Head of caudate nucleus (tissue), 42 donors: ENCODE measurements at regions of chr3 and their contacts with region 1.

Region 1: DNA sequence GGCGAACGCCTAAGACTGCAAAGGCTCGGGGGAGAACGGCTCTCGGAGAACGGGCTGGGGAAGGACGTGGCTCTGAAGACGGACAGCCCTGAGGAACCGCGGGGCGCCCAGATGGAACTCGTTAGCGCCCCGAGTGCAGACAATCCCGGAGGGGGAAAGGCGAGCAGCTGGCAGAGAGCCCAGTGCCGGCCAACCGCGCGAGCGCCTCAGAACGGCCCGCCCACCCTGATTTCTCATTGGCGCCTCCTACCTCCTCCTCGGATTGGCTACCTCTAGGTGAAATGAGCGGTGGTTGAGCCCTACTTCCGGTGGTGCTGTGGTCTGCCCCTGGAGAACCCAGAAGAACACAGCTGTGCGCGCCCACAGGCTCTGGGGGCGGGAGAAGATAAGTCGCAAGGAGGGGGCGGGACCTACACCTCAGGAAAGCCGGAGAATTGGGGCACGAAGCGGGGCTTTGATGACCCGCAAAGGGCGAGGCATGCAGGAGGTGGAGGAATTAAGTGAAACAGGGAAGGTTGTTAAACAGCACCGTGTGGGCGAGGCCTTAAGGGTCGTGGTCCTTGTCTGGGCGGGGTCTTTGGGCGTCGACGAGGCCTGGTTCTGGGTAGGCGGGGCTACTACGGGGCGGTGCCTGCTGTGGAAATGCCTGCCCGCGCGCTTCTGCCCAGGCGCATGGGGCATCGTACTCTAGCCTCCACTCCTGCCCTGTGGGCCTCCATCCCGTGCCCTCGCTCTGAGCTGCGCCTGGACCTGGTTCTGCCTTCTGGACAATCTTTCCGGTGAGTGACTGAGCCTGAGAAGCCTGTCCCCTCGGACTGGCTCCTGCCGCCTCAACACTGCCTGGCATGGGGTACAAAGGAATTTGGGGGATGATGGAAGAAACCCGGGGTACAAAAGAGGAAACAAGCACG is at the start of gene OGG1:
- DNase-seq: peak; percentile 93 to 99 (median 97)

Region 2: DNA sequence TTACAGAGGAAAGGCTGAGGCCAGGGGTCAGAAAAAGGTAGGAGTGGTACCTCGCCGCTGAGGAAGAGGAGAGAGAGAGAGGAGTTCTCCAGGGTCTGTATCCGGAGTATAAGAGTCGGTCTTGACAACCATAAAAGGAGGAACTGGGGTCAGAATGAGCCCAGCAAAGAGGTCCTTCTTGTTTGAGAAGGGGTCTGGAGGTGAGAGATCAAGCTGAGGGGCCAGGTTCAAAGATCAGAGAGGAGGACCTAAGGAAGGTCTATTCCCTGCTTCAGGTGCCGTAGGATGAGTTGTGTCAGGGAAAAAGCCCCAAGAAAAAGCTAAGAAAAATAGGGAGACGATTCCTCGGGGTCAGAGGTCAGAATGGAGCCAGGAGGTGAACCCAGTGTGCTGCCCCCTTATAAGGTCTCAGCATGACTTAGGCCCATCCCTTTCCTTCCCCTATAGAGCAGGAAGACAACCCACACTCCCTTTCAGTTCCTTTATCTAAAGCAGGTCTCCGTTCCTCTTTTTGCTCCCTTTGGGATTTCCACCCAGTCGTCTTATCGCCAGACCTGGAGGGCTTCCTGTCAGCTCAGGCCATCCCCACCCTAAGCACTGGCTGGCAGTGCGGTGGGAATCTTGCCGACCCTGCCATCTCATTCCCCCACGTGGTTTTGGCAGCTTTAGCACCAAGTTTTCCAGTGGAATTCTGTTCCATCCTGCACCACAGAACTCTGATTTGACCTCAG is 99.9 kb before region 1 on chr3:
- intact Hi-C with region 1: loop called (anchors 10 kb)
- DNase-seq: peak in 7 of 42 donors; percentile 5 to 42 (median 12)

Region 3: DNA sequence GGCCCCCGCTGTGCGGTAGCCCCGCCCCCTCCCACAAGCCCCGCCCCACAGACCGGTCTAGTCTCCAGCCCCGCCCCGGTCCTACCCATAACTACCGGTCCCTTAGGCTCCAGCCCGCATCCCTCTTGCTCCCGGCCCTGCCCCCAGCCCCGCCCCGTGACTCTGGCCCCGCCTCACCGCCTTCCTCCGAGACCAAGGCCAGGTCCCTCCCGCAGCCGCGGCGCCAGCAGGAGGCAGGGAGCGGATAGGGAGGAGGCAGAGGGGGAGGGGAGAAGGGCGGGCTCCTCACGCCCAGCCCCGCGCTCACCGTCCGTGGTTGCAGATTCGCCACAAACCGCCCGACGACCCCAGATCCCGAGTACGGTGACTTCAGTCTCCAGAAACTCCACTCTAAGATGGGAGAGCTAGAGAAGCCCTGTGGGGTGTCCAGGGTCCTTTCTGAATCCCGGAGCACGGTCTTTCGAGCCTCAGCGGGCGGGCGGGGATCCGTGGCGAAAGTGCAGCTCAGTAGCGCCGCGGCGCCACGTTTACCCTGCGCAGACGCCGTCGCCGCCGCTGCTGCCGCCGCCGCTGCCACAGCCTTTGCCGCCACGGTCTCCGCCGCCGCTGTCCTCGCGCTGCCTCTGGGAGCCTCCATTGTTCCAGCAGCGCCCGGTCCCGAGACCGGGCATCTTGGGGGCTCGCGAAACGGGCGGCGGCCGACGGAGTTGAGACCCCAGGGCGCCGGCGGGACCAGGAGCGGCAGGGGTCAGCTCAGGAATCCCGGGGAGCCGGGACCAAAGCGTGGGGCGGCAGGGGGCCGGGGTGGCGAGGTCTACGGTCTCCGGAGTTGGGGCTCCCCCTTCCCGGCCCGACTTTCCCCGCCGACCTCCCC is 18.5 kb before region 1 on chr3 and contains the start of gene BRPF1:
- intact Hi-C with region 1: loop called (anchors 2 kb)
- DNase-seq: peak; percentile 96 to 100 (median 100)

Region 4: GRCh38 chr3:9769426-9770275 is 19.8 kb after region 1 on chr3 and contains the start of gene CAMK1:
- intact Hi-C with region 1: loop called (anchors 2 kb)
- DNase-seq: peak; percentile 52 to 93 (median 83)

Region 5: GRCh38 chr3:9792405-9793160 is 42.7 kb after region 1 on chr3 and contains the starts of genes ARPC4 and TADA3:
- intact Hi-C with region 1: loop called (anchors 5 kb)
- DNase-seq: peak; percentile 77 to 97 (median 92)

Region 6: GRCh38 chr3:9862391-9863057 is 112.6 kb after region 1 on chr3:
- intact Hi-C with region 1: no loop called
- DNase-seq: peak in 12 of 42 donors; percentile 12 to 48 (median 24)